Endothelial cell of umbilical vein (primary cell): ENCODE measurements at regions of chr6 and their contacts with region 1.

Region 1: DNA sequence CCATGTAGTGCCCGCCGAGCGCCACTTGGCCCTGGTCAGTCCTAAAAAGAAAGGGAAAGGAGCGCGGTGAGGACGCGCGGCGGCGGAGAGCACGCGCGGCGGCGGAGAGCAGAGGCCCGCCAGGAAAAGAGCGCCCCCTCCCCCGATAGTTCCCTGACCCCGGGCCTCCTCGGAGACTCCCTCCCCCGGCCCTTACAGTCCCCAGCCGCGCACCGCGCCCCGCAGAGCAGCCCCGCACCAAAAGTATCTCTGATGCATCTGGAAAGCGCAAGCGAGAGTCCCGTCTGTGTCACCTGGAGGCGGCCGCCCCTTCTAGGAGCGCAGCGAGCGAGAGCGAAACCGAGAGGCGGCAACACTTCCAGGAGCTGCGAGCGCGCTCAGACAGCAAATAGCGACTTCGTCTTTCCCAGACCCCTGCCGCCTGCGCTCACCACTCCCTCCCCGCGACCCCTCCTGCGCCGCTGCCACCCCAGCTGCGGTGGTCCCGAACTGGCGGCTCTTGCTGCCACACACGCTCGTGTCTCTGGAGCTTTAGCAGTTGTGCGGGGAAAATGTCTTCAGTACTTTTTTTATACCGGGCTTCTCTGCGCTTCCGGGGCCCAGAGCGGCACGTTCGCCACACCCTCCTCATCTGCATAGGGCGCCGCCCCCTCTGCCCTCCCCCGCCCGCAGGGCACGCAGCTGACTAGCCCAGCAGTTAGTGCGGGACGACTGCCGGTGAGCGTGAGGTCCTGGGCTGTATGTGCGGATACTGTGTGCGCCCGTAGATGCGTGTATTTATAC is at the start of gene TENT5A:
- DNase-seq: peak; percentile 68
- H3K4me3 ChIP-seq: peak within 1 kb of the TSS; percentile 52 to 78 (median 69)
- H3K27ac ChIP-seq: peak within 1 kb of the TSS; percentile 42
- H3K4me1 ChIP-seq: peaks cover 8% of the 10 kb centered on the region
- H3K27me3 ChIP-seq: peaks cover 0 to 11% of the 10 kb centered on the region in 2 experiments
- CTCF ChIP-seq: no peak
- POLR2A ChIP-seq: peak; percentile 59
- total RNA-seq, gene TENT5A: 1.2 and 2.4 TPM in 2 replicates

Region 2: DNA sequence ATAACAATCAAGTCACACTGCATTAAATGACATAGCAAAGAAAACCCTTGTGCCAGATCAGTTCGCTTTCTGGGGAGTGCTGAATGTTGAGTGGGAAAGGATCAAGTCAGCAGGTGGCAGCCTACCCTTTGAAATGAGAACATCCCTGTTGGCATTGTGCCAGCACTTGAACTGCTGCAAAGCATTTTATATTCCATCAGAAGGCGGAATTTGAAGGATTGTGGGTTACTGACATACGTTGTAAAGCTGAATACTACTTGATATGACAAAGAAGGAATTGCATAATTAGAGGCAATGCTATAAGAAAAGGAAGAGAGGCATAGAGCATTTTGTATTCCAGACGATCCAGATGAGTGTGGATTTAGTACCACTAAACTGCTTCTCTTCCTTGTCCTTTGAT is 1619.3 kb before region 1 on chr6:
- CTCF ChIA-PET with region 1: no interaction called
- POLR2A ChIA-PET with region 1: no interaction called
- dilution Hi-C with region 1: no loop called
- intact Hi-C with region 1: loop called (anchors 1 kb)
- DNase-seq: peak; percentile 58
- H3K4me3 ChIP-seq: no peak overlapping the region
- H3K27ac ChIP-seq: no peak overlapping the region
- H3K4me1 ChIP-seq: peaks cover 7% of the 10 kb centered on the region
- H3K27me3 ChIP-seq: no peaks in the 10 kb centered on the region
- CTCF ChIP-seq: peak; percentile 39 to 45
- POLR2A ChIP-seq: no peak

Region 3: DNA sequence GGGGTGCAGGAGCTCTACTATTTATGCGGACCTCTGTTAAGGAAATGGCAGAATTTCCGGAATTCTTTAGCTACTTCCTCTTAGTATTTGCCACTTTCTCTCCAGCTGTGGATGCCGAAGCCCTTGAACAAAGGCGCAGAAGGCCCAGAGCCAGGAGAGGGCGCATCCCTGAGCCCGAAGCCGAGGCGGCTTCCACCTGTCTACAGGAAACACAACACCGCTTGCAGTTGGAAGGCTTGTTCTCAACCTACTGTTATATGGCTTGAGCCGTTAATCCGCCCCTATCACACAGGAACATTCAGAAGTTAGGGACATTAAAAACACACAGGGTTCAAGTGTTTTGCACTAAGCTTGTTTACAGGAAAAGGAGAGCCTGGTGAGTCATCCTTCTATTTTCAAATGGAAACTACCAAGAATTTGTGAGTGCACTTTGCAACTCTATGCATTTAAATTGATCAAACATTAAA is 1228.8 kb before region 1 on chr6:
- CTCF ChIA-PET with region 1: no interaction called
- POLR2A ChIA-PET with region 1: interaction called, 6 read pairs
- dilution Hi-C with region 1: no loop called
- intact Hi-C with region 1: loop called (anchors 5 kb)
- DNase-seq: peak; percentile 93
- H3K4me3 ChIP-seq: peak overlapping the region in 1 of 3 experiments; percentile 21
- H3K27ac ChIP-seq: peak overlapping the region; percentile 79
- H3K4me1 ChIP-seq: peaks cover 23% of the 10 kb centered on the region
- H3K27me3 ChIP-seq: no peaks in the 10 kb centered on the region
- CTCF ChIP-seq: peak; percentile 61 to 67
- POLR2A ChIP-seq: no peak

Region 4: DNA sequence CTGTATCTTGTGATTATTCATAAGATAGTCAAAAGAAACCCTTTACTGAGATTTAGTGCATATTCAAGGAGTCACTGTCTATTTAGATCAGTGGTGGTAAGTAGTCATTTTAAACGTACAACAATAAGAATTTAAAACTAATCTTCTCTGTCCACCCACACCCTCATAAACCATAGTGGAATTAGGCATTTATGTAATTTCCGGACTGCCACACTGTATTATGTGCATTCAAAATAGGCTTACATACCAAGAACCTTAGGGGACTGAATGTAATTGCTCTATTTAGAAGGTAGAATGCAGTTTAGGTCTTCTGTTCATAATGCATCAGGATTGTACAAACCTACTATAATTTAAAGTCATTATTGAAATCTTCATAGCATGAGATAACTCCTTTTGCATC is 685.3 kb before region 1 on chr6:
- CTCF ChIA-PET with region 1: no interaction called
- POLR2A ChIA-PET with region 1: no interaction called
- dilution Hi-C with region 1: no loop called
- intact Hi-C with region 1: no loop called
- DNase-seq: no peak
- H3K4me3 ChIP-seq: no peak overlapping the region
- H3K27ac ChIP-seq: no peak overlapping the region
- H3K4me1 ChIP-seq: no peaks in the 10 kb centered on the region
- H3K27me3 ChIP-seq: no peaks in the 10 kb centered on the region
- CTCF ChIP-seq: no peak
- POLR2A ChIP-seq: no peak

Region 5: GRCh38 chr6:81241126-81242041 is 510.9 kb before region 1 on chr6:
- CTCF ChIA-PET with region 1: interaction called, 6 read pairs
- POLR2A ChIA-PET with region 1: no interaction called
- dilution Hi-C with region 1: no loop called
- intact Hi-C with region 1: loop called (anchors 2 kb)
- DNase-seq: peak; percentile 23
- H3K4me3 ChIP-seq: no peak overlapping the region
- H3K27ac ChIP-seq: no peak overlapping the region
- H3K4me1 ChIP-seq: no peaks in the 10 kb centered on the region
- H3K27me3 ChIP-seq: no peaks in the 10 kb centered on the region
- CTCF ChIP-seq: peak; percentile 24 to 29
- POLR2A ChIP-seq: no peak

Region 6: GRCh38 chr6:81634155-81634880 is 118.0 kb before region 1 on chr6:
- CTCF ChIA-PET with region 1: no interaction called
- POLR2A ChIA-PET with region 1: no interaction called
- dilution Hi-C with region 1: no loop called
- intact Hi-C with region 1: no loop called
- DNase-seq: no peak
- H3K4me3 ChIP-seq: no peak overlapping the region
- H3K27ac ChIP-seq: no peak overlapping the region
- H3K4me1 ChIP-seq: no peaks in the 10 kb centered on the region
- H3K27me3 ChIP-seq: no peaks in the 10 kb centered on the region
- CTCF ChIP-seq: no peak
- POLR2A ChIP-seq: no peak

Region 7: GRCh38 chr6:81708113-81708699 is 44.1 kb before region 1 on chr6:
- CTCF ChIA-PET with region 1: no interaction called
- POLR2A ChIA-PET with region 1: no interaction called
- dilution Hi-C with region 1: no loop called
- intact Hi-C with region 1: no loop called
- DNase-seq: no peak
- H3K4me3 ChIP-seq: no peak overlapping the region
- H3K27ac ChIP-seq: no peak overlapping the region
- H3K4me1 ChIP-seq: no peaks in the 10 kb centered on the region
- H3K27me3 ChIP-seq: no peaks in the 10 kb centered on the region
- CTCF ChIP-seq: no peak
- POLR2A ChIP-seq: no peak

Region 8: GRCh38 chr6:81766482-81767069 is 14.2 kb after region 1 on chr6:
- CTCF ChIA-PET with region 1: interaction called, 9 read pairs
- POLR2A ChIA-PET with region 1: interaction called, 3 read pairs
- dilution Hi-C with region 1: no loop called
- intact Hi-C with region 1: loop called (anchors 1 kb)
- DNase-seq: peak; percentile 92
- H3K4me3 ChIP-seq: no peak overlapping the region
- H3K27ac ChIP-seq: no peak overlapping the region
- H3K4me1 ChIP-seq: peaks cover 12% of the 10 kb centered on the region
- H3K27me3 ChIP-seq: peaks cover 28 to 46% of the 10 kb centered on the region in 2 experiments
- CTCF ChIP-seq: no peak
- POLR2A ChIP-seq: no peak

Region 9: GRCh38 chr6:82006027-82006738 is 253.9 kb after region 1 on chr6:
- CTCF ChIA-PET with region 1: interaction called, 17 read pairs
- POLR2A ChIA-PET with region 1: no interaction called
- dilution Hi-C with region 1: no loop called
- intact Hi-C with region 1: loop called (anchors 1 kb)
- DNase-seq: no peak
- H3K4me3 ChIP-seq: no peak overlapping the region
- H3K27ac ChIP-seq: no peak overlapping the region
- H3K4me1 ChIP-seq: no peaks in the 10 kb centered on the region
- H3K27me3 ChIP-seq: no peaks in the 10 kb centered on the region
- CTCF ChIP-seq: peak; percentile 61 to 66
- POLR2A ChIP-seq: no peak

Region 10: GRCh38 chr6:82066991-82067411 is 314.7 kb after region 1 on chr6:
- CTCF ChIA-PET with region 1: no interaction called
- POLR2A ChIA-PET with region 1: no interaction called
- dilution Hi-C with region 1: no loop called
- intact Hi-C with region 1: no loop called
- DNase-seq: peak; percentile 73
- H3K4me3 ChIP-seq: no peak overlapping the region
- H3K27ac ChIP-seq: no peak overlapping the region
- H3K4me1 ChIP-seq: peaks cover 4% of the 10 kb centered on the region
- H3K27me3 ChIP-seq: no peaks in the 10 kb centered on the region
- CTCF ChIP-seq: no peak
- POLR2A ChIP-seq: no peak